B cell (primary cell): ENCODE measurements at regions of chr2 and their contacts with region 1.

Region 1: GRCh38 chr2:70767699-70768589 is at the start of gene ADD2:
- DNase-seq: peak; percentile 84
- ATAC-seq: peak; percentile 61
- H3K4me3 ChIP-seq: peak within 1 kb of the TSS; percentile 50 to 78 (median 76)
- H3K4me3 Mint-ChIP-seq: peak within 1 kb of the TSS; percentile 92
- H3K27ac ChIP-seq: peak within 1 kb of the TSS; percentile 58 to 73
- H3K27ac Mint-ChIP-seq: peak within 1 kb of the TSS; percentile 89
- H3K4me1 ChIP-seq: peaks cover 9 to 13% of the 10 kb centered on the region in 2 donors
- H3K4me1 Mint-ChIP-seq: peaks cover 29% of the 10 kb centered on the region
- H3K27me3 ChIP-seq: peaks cover 0 to 24% (median 11%) of the 10 kb centered on the region in 4 experiments
- H3K27me3 Mint-ChIP-seq: peaks cover 21% of the 10 kb centered on the region
- CTCF ChIP-seq: peak; percentile 53
- total RNA-seq, gene ADD2: 21.7 and 22.3 TPM in 2 replicates

Region 2: GRCh38 chr2:70627211-70627902 is 140.6 kb before region 1 on chr2:
- CTCF ChIA-PET with region 1: no interaction called
- POLR2A ChIA-PET with region 1: no interaction called
- intact Hi-C with region 1: no loop called
- DNase-seq: no peak
- ATAC-seq: no peak
- H3K4me3 ChIP-seq: no peak overlapping the region
- H3K4me3 Mint-ChIP-seq: no peak overlapping the region
- H3K27ac ChIP-seq: no peak overlapping the region
- H3K27ac Mint-ChIP-seq: no peak overlapping the region
- H3K4me1 ChIP-seq: no peaks in the 10 kb centered on the region
- H3K4me1 Mint-ChIP-seq: no peaks in the 10 kb centered on the region
- H3K27me3 ChIP-seq: peaks cover 0 to 6% (median 0%) of the 10 kb centered on the region in 4 experiments
- H3K27me3 Mint-ChIP-seq: peaks cover 44% of the 10 kb centered on the region
- CTCF ChIP-seq: no peak

Region 3: DNA sequence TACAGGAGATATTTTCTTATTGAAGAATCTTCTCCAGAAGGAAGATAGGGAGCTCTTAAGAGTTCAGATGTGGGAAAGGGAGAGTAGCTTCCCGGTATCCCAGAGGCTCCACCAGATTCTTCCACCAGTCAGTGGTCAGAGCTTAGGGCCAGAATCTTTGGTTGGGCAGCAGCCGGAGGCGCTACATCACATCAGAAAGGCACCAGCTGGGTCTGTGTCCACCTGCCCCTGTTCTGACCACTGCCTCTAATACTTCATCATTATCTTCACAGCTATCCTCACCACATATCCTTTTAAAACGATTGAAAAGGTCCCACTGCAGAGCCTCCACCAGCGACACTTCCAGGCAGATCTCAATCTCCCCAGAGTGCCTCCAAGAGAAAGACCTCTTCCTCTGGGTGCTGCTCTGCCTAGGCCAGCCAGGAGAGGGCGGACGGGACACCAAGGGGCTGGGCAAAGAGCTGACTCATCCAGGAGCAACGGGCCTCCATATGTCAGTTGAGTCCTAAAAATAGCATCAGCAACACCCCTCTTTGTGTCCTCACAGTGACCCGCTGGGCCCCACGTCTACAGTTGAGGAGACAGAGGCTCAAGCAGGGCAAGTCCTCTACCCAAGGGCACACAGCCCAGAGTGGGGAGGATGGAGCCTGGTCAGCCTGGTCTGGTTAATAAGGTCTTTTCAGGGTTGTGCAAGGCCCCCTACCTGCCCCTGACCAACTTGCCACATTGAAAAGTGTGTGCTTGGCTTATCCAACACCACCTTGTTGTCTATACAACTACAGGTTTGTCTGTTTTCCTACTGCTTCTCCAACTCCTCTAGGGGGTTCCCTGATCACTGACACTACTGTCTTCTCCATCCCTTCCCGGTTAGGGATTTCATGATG is 81.1 kb before region 1 on chr2:
- CTCF ChIA-PET with region 1: interaction called, 3 read pairs
- POLR2A ChIA-PET with region 1: no interaction called
- intact Hi-C with region 1: loop called (anchors 1 kb)
- DNase-seq: peak; percentile 13
- ATAC-seq: no peak
- H3K4me3 ChIP-seq: no peak overlapping the region
- H3K4me3 Mint-ChIP-seq: no peak overlapping the region
- H3K27ac ChIP-seq: no peak overlapping the region
- H3K27ac Mint-ChIP-seq: no peak overlapping the region
- H3K4me1 ChIP-seq: no peaks in the 10 kb centered on the region
- H3K4me1 Mint-ChIP-seq: no peaks in the 10 kb centered on the region
- H3K27me3 ChIP-seq: no peaks in the 10 kb centered on the region
- H3K27me3 Mint-ChIP-seq: no peaks in the 10 kb centered on the region
- CTCF ChIP-seq: no peak